A549 (cell line): ENCODE measurements at regions of chr1 and their contacts with region 1.

Region 1: DNA sequence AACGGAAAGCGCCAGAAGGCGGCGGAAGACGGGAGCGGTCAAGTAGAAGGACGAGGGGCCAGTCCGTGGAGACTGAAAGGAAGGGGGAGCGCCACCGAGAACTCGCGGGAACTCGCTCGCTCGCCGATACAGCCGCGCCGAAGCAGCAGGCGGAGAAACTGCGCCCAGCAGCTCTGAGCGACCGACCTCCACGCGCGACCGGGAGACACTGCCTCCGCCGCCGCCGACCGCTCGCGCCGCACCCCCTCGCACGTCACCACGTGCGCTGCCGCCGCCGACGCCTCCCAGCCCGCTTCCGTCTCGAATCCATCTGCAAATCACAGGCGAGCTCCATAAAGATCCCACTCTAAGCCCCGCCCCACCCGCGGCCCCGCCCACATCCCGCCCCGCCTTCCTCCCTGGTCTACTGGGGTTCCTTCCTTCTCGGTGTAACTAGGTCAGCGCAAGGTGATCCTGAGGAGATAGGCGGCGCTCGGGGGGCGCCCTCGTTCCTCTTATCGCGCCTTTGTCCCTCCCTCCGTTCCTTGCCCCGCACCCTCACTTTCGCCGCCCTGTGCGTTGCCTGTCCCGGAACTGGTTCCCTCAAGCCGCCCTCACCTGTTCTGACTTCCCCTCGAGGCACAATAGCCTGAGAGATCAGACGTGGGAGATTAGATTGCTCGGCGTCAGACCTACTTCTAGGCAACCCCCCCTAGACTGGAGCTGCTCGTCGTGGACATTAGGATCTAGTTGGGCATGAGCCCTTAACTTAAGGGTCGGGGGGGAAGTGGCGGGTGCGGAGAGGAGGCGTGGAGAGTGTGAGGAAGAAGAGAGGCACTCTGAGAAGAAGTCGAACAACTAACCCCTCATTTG is at the start of gene IVNS1ABP:
- DNase-seq: peak; percentile 89 to 96
- ATAC-seq: peak; percentile 84 to 88
- H3K4me3 ChIP-seq: peak within 1 kb of the TSS; percentile 89
- H3K27ac ChIP-seq: peak within 1 kb of the TSS; percentile 87 to 94
- H3K4me1 ChIP-seq: peaks cover 47% of the 10 kb centered on the region
- CTCF ChIP-seq: peak; percentile 64
- EP300 ChIP-seq: no peak
- POLR2A ChIP-seq: peak; percentile 90
- RAD21 ChIP-seq: peak; percentile 69 to 95
- polyA plus RNA-seq, gene IVNS1ABP: 62.9 and 71.4 TPM in 2 replicates

Region 2: GRCh38 chr1:185439727-185440415 is 122.6 kb after region 1 on chr1:
- CTCF ChIA-PET with region 1: no interaction called
- POLR2A ChIA-PET with region 1: interaction called, 14 read pairs
- DNase-seq: peak; percentile 35 to 77
- ATAC-seq: peak; percentile 74 to 75
- H3K4me3 ChIP-seq: no peak overlapping the region
- H3K27ac ChIP-seq: peak overlapping the region; percentile 74 to 84
- H3K4me1 ChIP-seq: peaks cover 40% of the 10 kb centered on the region
- CTCF ChIP-seq: no peak
- EP300 ChIP-seq: peak in 1 of 2 experiments; percentile 15; a peak in 1 of 5 replicates
- POLR2A ChIP-seq: no peak
- RAD21 ChIP-seq: no peak

Region 3: DNA sequence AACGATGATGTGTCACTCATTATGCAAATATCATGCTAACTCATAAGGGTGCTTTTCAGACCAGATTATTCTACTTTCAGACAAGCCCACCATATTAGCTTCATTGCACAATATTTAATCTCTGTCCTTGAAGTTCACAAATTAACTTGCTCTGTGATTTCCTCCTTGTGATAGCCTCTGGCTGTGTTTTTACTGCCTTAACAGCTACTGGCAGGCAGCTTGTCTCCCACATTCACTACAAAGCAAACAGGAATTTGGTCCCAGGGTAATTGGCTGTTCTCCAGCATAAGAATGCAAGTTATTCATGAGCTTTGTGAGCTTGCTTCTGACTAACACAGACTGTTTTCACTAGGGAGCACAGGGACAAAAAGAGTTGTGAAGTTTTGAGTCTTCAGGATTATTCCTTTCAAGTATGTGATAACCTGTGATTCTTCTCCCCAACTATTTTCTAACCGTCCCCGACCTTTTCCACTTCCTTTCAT is 329.0 kb after region 1 on chr1:
- CTCF ChIA-PET with region 1: interaction called, 5 read pairs
- POLR2A ChIA-PET with region 1: interaction called, 23 read pairs
- DNase-seq: peak; percentile 68 to 96
- ATAC-seq: peak; percentile 96 to 98
- H3K4me3 ChIP-seq: peak overlapping the region; percentile 14; the same call in 1 of the 3 replicates
- H3K27ac ChIP-seq: peak overlapping the region; percentile 70 to 80
- H3K4me1 ChIP-seq: peaks cover 36% of the 10 kb centered on the region
- CTCF ChIP-seq: no peak
- EP300 ChIP-seq: peak; percentile 84 to 88; a peak in 4 of 5 replicates
- POLR2A ChIP-seq: no peak
- RAD21 ChIP-seq: peak in 1 of 2 experiments; percentile 60; a peak in 4 of 5 replicates

Region 4: DNA sequence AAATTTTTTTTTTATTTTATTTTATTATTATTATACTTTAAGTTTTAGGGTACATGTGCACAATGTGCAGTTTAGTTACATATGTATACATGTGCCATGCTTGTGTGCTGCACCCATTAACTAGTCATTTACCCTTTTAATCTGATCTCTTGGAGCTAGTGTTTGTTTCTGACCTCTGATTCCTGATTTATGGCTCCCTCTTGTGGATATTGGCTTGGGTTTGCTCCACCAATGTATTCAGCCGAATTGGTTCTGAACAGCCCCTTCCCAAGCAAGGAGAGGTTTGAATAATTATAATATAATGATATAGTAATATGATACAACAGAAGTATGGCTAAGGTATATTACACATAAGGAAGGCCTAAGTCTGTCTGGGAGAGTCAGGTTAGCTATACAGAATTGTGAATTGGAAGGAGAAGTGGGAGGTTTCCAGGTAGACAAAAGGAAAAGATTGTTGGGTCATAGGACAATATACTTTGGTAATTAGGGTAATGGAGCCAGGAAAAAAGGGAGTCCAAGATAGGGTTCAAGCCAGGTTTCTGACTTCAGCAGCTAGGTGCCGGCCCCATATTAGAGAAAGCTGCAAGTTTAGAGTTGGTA is 363.9 kb after region 1 on chr1:
- CTCF ChIA-PET with region 1: interaction called, 30 read pairs
- POLR2A ChIA-PET with region 1: interaction called, 16 read pairs
- DNase-seq: peak; percentile 21 to 56
- ATAC-seq: peak; percentile 77 to 86; a peak in 4 of 6 replicates
- H3K4me3 ChIP-seq: no peak overlapping the region
- H3K27ac ChIP-seq: no peak overlapping the region
- H3K4me1 ChIP-seq: no peaks in the 10 kb centered on the region
- CTCF ChIP-seq: peak; percentile 77
- EP300 ChIP-seq: no peak
- POLR2A ChIP-seq: no peak
- RAD21 ChIP-seq: peak; percentile 86 to 87